IMR-90 (cell line): ENCODE measurements at regions of chr14 and their contacts with region 1.

Region 1: DNA sequence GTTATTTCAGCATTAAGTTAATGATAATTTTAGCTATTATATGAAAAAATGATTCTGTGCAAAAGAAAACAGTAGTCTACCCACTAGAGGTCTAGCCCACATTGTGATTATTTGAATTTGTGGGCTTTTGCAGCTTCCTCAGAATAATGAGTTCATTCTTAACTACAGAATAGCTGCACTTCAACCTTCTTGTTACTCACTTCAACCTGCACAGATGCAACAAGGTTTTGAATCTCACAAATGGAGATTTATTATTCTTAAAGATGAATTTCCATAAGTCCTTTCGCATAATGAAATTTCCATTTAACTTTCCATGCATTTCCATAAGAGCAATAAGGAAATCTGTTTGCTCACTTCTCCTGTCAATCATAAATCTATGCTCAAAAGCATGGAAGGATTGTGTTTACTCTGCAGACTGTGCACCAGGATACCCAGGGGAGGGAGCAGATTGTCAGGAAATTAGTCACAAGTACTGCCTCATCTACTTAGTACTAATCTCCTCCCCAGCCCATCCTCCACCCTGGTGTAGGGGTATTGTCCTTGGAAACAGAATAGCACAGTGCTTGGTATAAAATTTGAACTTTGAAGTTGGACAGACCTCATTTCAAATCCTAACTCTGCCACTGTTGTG is 24.1 kb downstream of the PTGER2 start:
- DNase-seq: peak; percentile 70
- ATAC-seq: peak; percentile 84
- H3K4me3 ChIP-seq: no peak overlapping the region
- H3K27ac ChIP-seq: no peak overlapping the region
- H3K4me1 ChIP-seq: peaks cover 16% of the 10 kb centered on the region
- H3K27me3 ChIP-seq: no peaks in the 10 kb centered on the region
- CTCF ChIP-seq: no peak
- POLR2A ChIP-seq: no peak
- RAD21 ChIP-seq: no peak

Region 2: DNA sequence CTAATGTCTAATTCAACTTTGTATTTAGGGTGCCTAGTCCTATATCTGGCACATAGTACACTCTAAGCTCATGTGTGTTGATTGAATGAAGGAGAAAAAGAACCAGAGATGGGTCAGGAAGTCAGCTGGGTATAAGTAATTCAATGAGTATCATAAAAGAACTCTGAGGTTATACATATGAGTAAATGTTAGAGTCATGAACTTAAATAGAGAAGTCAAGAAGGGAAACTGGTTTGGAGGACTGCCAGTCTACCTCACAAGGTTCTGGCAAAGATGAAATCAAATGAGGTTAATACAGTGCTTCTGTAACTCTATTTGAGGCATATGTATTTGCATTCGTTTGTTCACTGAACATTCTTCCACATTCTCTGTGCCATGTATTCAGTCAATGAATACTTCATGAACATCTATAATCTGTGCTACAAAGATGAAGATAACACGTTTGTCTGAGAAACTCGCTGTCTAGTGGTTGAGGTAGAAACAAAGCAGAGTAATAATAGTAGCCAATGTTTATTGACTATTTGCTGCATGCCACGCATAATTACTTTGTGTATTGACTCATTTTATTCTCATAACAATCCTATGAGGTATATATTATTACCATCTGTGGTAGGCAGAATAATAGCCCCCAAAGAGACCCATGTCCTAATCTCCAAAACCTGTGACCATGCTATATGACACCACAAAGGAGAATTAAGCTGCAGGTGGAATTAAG is 64.8 kb after region 1 on chr14:
- CTCF ChIA-PET with region 1: no interaction called
- POLR2A ChIA-PET with region 1: no interaction called
- dilution Hi-C with region 1: no loop called
- in situ Hi-C with region 1: no loop called
- intact Hi-C with region 1: loop called (anchors 5 kb)
- DNase-seq: peak; percentile 72
- ATAC-seq: no peak
- H3K4me3 ChIP-seq: no peak overlapping the region
- H3K27ac ChIP-seq: no peak overlapping the region
- H3K4me1 ChIP-seq: peaks cover 22% of the 10 kb centered on the region
- H3K27me3 ChIP-seq: no peaks in the 10 kb centered on the region
- CTCF ChIP-seq: no peak
- POLR2A ChIP-seq: no peak
- RAD21 ChIP-seq: no peak

Region 3: DNA sequence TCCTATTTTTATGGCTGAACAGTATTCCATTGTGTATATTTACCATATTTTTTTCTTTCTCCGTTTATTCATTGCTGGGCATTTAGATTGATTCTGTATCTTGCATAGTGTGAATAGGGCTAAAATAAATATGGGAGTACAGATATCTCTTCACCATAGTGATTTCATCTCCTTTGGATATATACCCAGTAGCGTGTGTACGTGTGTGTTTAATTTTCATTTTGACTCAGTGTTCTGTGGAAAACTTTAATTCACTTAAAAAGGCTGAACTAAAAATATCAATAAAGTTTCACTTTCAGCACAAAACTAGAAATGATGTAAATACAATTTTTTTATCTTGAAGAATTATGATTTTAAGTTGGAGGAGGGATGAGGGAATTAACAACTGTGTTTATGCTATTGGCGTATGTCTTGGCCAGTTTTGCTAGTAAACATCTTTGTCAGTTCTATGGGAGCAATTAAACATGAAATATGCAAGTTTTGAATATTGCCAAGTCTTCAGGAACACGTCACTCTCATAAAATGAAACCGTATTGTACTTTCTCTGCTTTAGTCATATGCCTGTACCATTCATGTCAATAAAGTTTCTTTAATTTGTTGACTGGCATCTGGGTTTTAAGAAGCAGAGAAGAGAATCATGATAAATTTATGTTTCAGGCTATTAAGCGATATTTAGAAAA is 75.7 kb after region 1 on chr14:
- CTCF ChIA-PET with region 1: no interaction called
- POLR2A ChIA-PET with region 1: interaction called, 10 read pairs
- dilution Hi-C with region 1: no loop called
- in situ Hi-C with region 1: no loop called
- intact Hi-C with region 1: no loop called
- DNase-seq: peak; percentile 65
- ATAC-seq: peak; percentile 72
- H3K4me3 ChIP-seq: peak overlapping the region; percentile 32; the same call in 1 of the 2 replicates
- H3K27ac ChIP-seq: no peak overlapping the region
- H3K4me1 ChIP-seq: peaks cover 5% of the 10 kb centered on the region
- H3K27me3 ChIP-seq: no peaks in the 10 kb centered on the region
- CTCF ChIP-seq: no peak
- POLR2A ChIP-seq: no peak
- RAD21 ChIP-seq: no peak